GM12878 (cell line): ENCODE measurements at regions of chr9 and their contacts with region 1.

Region 1: DNA sequence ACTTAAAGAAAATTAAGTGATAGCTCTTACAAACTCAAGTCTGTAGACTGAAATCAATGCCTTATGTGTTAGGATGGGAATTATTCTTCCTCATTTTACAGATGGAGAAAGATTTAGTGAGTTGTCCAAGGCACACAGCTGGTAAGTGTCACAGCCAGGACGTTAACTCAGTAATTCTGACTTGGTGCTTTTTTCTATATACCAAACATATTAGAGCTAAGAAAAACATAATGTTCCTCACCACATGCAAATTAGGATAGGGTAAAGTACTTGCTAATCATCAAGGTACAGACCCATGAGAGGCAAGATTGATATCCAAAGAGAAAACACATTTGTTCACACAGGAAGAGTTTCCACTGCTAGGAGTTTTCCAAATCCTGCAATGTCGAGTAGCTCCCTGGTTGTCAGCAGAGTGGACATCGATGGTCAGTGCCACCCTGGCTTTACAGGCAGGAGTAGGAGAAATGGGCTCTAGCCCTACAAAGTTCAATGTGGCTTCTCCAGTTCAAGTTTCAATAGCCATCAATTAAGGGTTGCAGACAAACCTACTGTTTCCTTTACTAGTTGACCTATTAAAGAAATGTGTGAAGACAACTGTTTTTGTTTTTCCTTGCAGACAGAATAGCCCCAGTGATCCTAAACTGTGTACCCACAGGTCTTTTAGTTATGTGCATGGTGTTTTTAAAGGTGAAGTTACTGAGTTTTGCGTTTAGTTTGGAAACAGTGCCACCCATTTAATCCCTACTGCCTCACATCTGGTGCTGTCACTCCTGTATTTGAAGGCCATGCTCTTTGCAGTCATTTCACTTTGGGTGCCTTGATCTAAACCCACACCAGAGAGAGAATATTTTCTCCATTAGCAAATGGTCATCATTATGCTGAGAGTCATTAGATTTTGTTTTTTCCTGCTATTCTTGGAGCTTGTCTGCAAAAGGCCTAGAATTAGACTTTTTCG is 460.8 kb upstream of the SMARCA2 start:
- DNase-seq: peak; percentile 24
- ATAC-seq: peak; percentile 85
- H3K4me3 ChIP-seq: no peak overlapping the region
- H3K27ac ChIP-seq: no peak overlapping the region
- H3K4me1 ChIP-seq: no peaks in the 10 kb centered on the region
- H3K27me3 ChIP-seq: no peaks in the 10 kb centered on the region; a peak in 1 of 4 replicates
- CTCF ChIP-seq: no peak
- EP300 ChIP-seq: no peak; a peak in 1 of 4 replicates
- POLR2A ChIP-seq: no peak
- RAD21 ChIP-seq: no peak

Region 2: GRCh38 chr9:1490341-1491232 is 63.8 kb before region 1 on chr9:
- CTCF ChIA-PET with region 1: no interaction called
- POLR2A ChIA-PET with region 1: no interaction called
- RAD21 ChIA-PET with region 1: interaction called, 12 read pairs
- SMC1A ChIA-PET with region 1: interaction called, 6 read pairs
- in situ Hi-C with region 1: no loop called
- intact Hi-C with region 1: no loop called
- DNase-seq: peak; percentile 35
- ATAC-seq: peak; percentile 96
- H3K4me3 ChIP-seq: no peak overlapping the region
- H3K27ac ChIP-seq: peak overlapping the region; percentile 22; the same call in 1 of the 2 replicates
- H3K4me1 ChIP-seq: peaks cover 9% of the 10 kb centered on the region; the same call in 1 of the 2 replicates
- H3K27me3 ChIP-seq: no peaks in the 10 kb centered on the region
- CTCF ChIP-seq: no peak
- EP300 ChIP-seq: peak; percentile 45 to 59; a peak in 2 of 4 replicates
- POLR2A ChIP-seq: no peak
- RAD21 ChIP-seq: no peak

Region 3: DNA sequence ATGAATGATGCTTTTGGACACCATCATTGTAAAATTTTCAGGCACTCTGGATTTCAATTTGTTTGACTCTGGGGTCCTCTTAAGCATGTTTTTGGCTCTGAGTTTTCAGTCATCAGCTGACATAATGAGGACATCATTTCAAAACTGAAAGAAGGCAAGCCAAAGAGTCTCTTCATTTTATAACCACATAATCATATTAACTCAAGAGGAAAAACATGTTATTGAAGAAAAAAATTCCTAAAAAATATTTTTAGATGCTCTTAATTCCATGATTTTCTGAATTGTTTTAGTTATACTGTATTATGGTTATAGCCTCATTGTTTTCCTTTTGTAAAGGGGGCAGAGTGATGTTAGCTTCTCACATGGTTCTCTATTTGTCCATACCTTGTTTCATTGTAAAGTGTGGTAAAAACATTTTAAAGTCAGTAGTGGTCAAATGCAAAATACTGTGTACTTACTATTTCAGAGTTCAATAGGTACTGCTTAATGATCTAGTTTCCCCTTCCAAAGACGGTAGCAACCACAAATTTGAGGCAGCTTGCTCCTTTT is 32.1 kb before region 1 on chr9:
- CTCF ChIA-PET with region 1: interaction called, 7 read pairs
- POLR2A ChIA-PET with region 1: interaction called, 6 read pairs
- RAD21 ChIA-PET with region 1: interaction called, 23 read pairs
- SMC1A ChIA-PET with region 1: interaction called, 9 read pairs
- in situ Hi-C with region 1: no loop called
- intact Hi-C with region 1: no loop called
- DNase-seq: no peak
- ATAC-seq: peak; percentile 92
- H3K4me3 ChIP-seq: no peak overlapping the region
- H3K27ac ChIP-seq: no peak overlapping the region
- H3K4me1 ChIP-seq: no peaks in the 10 kb centered on the region; the same call in 1 of the 2 replicates
- H3K27me3 ChIP-seq: no peaks in the 10 kb centered on the region
- CTCF ChIP-seq: peak in 1 of 3 experiments; percentile 22; a peak in 1 of 6 replicates
- EP300 ChIP-seq: peak in 1 of 2 experiments; percentile 45; a peak in 1 of 4 replicates
- POLR2A ChIP-seq: no peak
- RAD21 ChIP-seq: 0 out of 2 replicates have a peak, but pooled peaks have one; percentile 14

Region 4: DNA sequence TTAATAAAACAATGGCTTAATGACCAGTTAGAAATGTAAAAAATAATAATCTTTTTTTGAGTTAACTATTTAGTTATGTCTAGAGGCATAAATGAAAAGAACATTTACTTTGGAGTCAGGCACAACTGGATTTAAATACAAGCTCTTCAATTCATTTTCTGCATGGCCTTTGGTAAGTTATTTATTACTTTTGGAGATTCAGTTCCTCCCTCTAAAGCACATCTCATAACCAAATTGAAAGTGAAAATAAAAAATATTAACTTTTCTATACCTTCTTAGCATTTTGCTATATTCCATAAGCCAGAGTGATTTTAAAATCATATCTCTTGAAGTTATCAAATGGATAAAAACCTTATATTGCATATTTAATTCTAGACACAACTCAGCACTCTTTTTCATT is 25.9 kb after region 1 on chr9:
- CTCF ChIA-PET with region 1: interaction called, 4 read pairs
- POLR2A ChIA-PET with region 1: interaction called, 8 read pairs
- RAD21 ChIA-PET with region 1: interaction called, 10 read pairs
- SMC1A ChIA-PET with region 1: interaction called, 36 read pairs
- in situ Hi-C with region 1: no loop called
- intact Hi-C with region 1: no loop called
- DNase-seq: no peak
- ATAC-seq: peak; percentile 92
- H3K4me3 ChIP-seq: no peak overlapping the region
- H3K27ac ChIP-seq: no peak overlapping the region
- H3K4me1 ChIP-seq: 0 out of 2 replicates have a peak, but pooled peaks cover 2% of the 10 kb centered on the region
- H3K27me3 ChIP-seq: no peaks in the 10 kb centered on the region
- CTCF ChIP-seq: no peak
- EP300 ChIP-seq: no peak
- POLR2A ChIP-seq: no peak
- RAD21 ChIP-seq: no peak